ENCODE measurements at regions of chr16 and their contacts with region 1.

Region 1: DNA sequence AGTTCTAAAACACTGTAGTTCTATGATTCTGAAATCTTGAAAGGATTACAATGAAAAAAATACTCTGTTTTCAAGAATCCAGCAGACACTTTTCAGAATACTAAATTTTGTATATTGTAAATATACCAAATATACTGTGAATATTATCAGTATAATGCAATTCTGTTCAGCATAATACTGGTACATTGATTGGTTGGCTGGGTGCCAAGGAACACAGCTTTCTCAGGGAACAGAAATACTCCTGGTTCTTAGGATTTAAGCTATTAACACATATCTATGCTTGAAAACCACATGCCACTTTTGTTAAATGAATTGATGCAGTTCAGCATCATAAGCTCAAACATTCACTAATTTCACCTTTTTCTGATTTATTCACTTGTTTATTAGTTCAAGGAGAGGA is 2.5 kb upstream of the GINS3 start:
- DNase-seq: no peak
- H3K4me3 ChIP-seq: no peak overlapping the region
- H3K27ac ChIP-seq: no peak overlapping the region
- H3K4me1 ChIP-seq: peaks cover 17% of the 10 kb centered on the region
- H3K27me3 ChIP-seq: no peaks in the 10 kb centered on the region
- CTCF ChIP-seq: no peak

Region 2: GRCh38 chr16:58352690-58353089 is 37.0 kb before region 1 on chr16:
- intact Hi-C with region 1: loop called (anchors 2 kb)
- DNase-seq: no peak
- H3K4me3 ChIP-seq: no peak overlapping the region
- H3K27ac ChIP-seq: no peak overlapping the region
- H3K4me1 ChIP-seq: peaks cover 11% of the 10 kb centered on the region
- H3K27me3 ChIP-seq: no peaks in the 10 kb centered on the region
- CTCF ChIP-seq: no peak

Region 3: GRCh38 chr16:58451945-58452401 is 62.2 kb after region 1 on chr16:
- intact Hi-C with region 1: no loop called
- DNase-seq: no peak
- H3K4me3 ChIP-seq: no peak overlapping the region
- H3K27ac ChIP-seq: peak overlapping the region; percentile 76
- H3K4me1 ChIP-seq: peaks cover 23% of the 10 kb centered on the region
- H3K27me3 ChIP-seq: no peaks in the 10 kb centered on the region
- CTCF ChIP-seq: no peak

Measured in left ventricle myocardium inferior (tissue), 1 donor.